GM18951 (cell line): ENCODE measurements at regions of chr7 and their contacts with region 1.

Region 1: GRCh38 chr7:142632291-142633134 is 116.8 kb upstream of the PRSS1 start:
- POLR2A ChIP-seq: no peak

Region 2: GRCh38 chr7:142139597-142140400 is 492.7 kb before region 1 on chr7:
- in situ Hi-C with region 1: no loop called
- POLR2A ChIP-seq: no peak

Region 3: GRCh38 chr7:142811154-142811737 is 178.7 kb after region 1 on chr7:
- in situ Hi-C with region 1: loop called (anchors 25 kb)
- POLR2A ChIP-seq: no peak